ENCODE measurements at regions of chr9 and their contacts with region 1.

Region 1: DNA sequence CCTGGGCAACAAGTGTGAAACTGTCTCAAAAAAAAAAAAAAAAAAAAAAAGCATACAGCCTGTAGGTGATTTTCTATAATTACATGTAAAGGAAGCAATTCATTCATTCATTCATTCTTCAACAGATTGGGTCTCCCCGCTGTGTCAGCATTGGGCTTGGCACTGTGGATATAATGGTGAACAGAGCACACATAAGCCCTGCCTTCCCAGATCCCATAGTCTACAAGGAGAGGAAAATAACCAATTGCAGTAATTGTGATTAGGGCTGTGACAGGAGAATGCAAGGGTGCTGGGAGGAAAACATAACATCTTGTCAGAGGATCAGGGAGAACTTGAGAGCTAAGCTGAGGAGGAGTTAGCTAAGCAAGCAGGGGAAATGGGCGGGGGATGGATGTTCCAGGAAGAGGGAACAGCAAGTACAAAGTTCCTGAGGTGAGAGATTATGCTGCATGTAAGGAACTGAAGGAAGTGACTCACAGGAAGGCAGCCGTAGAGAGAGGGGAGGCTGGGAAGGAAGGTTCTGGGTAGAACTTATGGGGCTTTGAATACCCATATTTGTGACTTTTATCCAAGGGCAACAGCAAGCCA is 24.0 kb upstream of the KLF9 start:
- DNase-seq: peak in 1 of 2 experiments; percentile 15
- H3K4me3 ChIP-seq: no peak overlapping the region
- H3K27ac ChIP-seq: no peak overlapping the region
- H3K4me1 ChIP-seq: peaks cover 17% of the 10 kb centered on the region
- H3K27me3 ChIP-seq: no peaks in the 10 kb centered on the region
- CTCF ChIP-seq: no peak

Region 2: GRCh38 chr9:70229579-70229978 is 208.9 kb before region 1 on chr9:
- CTCF ChIA-PET with region 1: no interaction called
- POLR2A ChIA-PET with region 1: no interaction called
- intact Hi-C with region 1: no loop called
- DNase-seq: no peak
- H3K4me3 ChIP-seq: no peak overlapping the region
- H3K27ac ChIP-seq: no peak overlapping the region
- H3K4me1 ChIP-seq: no peaks in the 10 kb centered on the region
- H3K27me3 ChIP-seq: no peaks in the 10 kb centered on the region
- CTCF ChIP-seq: peak; percentile 62

Region 3: DNA sequence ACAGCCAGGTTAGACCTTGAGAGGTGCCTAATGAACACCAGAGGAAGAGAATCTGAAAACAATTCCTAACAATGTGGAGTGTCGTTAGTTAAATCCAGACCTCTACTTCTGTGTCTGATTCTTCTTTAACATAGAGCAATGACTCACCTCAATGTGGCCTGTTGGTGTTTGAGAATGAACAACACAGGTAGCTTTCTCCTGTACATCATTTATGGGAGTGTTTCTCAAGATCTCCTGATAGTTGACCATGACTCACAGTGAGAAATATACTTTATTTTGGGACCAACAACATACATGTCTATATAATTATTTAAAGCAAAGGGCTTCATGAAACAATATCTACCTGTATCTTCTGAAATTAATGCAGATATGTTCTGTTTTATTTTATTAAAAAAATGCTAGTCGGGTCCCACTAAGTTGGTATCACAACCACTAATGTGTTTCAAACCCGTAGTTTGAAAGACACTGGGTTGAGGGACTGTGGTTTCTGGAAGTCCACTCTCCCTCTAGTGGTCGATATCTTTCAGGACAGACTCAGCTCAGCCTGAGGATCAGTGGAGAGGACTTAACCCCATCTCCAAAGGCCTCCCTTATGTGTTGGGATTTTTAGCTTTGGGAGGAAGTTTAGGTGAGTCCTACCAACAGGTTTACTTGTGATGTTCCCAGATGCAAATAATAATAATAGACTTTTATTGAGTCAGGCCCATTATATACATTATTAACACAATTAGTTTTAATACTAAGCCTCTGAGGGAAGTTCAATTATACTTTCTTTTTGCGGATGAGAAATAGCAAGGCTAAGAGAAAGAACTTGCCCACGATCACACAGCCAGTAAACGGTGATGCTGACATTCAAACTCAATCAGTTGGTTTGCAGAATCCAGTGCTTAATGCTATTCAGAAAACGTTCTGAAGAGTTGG is 46.0 kb after region 1 on chr9:
- CTCF ChIA-PET with region 1: no interaction called
- POLR2A ChIA-PET with region 1: no interaction called
- intact Hi-C with region 1: loop called (anchors 5 kb)
- DNase-seq: peak; percentile 21 to 49
- H3K4me3 ChIP-seq: no peak overlapping the region
- H3K27ac ChIP-seq: no peak overlapping the region
- H3K4me1 ChIP-seq: peaks cover 14% of the 10 kb centered on the region; the same call in 1 of the 2 replicates
- H3K27me3 ChIP-seq: no peaks in the 10 kb centered on the region
- CTCF ChIP-seq: peak; percentile 80

Measured in PC-9 (cell line).